Brain microvascular endothelial cell (primary cell): ENCODE measurements at regions of chr3 and their contacts with region 1.

Region 1: DNA sequence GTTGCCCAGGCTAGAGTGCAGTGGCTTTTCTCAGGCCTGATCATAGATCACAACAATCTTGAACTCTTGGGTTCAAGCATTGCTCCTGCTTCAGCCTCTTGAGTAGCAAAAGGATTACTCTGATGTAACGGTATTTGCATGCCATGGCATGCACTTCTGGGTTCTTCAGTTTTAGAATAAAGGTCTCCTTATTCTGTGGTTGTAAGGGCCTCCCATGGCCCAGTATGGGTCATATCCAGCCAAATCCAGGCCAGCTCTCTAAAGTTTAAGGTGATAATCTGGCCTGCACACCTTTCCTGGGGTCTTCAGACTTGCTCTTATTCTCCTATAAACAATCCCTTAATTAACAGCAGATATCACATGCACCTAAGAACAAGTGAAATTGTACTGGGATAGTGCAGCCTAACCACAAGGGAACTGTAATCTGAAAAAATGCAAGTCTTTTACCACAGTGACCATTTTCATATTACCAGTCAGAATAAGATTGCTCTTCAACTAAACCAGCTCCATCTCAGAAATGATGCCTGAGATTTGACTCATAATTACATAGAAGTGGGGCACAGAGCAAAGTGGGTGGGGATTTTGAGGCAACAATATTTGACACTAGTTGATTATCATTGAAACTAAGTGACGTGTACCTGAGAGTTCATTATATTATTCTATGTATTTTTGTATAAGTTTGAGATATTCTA is 25.4 kb downstream of the COMMD2 start:
- DNase-seq: no peak
- H3K4me3 ChIP-seq: no peak overlapping the region
- H3K27ac ChIP-seq: no peak overlapping the region
- H3K27me3 ChIP-seq: no peaks in the 10 kb centered on the region
- CTCF ChIP-seq: no peak

Region 2: GRCh38 chr3:149512209-149512782 is 214.6 kb before region 1 on chr3:
- in situ Hi-C with region 1: loop called (anchors 25 kb)
- DNase-seq: peak; percentile 45
- H3K4me3 ChIP-seq: no peak overlapping the region
- H3K27ac ChIP-seq: no peak overlapping the region
- H3K27me3 ChIP-seq: no peaks in the 10 kb centered on the region
- CTCF ChIP-seq: peak; percentile 88

Region 3: DNA sequence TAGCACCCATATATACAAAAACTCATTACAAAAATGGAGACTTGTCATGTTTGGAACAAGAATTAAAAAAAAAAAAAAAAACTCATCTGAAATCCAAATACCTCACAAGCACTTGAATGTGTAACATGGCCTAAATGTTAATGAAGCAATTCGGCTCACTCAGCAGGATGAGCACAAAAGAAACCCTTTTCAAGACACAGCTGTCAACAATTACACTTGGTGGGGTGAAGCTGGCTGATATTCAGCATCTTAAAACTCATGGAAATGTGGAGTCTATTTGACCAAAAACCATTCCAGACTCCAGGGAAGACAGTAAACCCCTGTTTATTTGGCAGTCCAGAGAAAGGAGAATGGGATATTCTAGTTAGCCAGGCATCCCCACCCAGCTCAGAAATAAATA is 475.8 kb after region 1 on chr3:
- in situ Hi-C with region 1: no loop called
- DNase-seq: no peak
- H3K4me3 ChIP-seq: no peak overlapping the region
- H3K27ac ChIP-seq: no peak overlapping the region
- H3K27me3 ChIP-seq: no peaks in the 10 kb centered on the region
- CTCF ChIP-seq: no peak